GM10248 (cell line): ENCODE measurements at regions of chr17 and their contacts with region 1.

Region 1: GRCh38 chr17:41548844-41549595 is 20.9 kb upstream of the KRT19 start:
- DNase-seq: peak; percentile 83
- CTCF ChIP-seq: peak; percentile 97

Region 2: GRCh38 chr17:40854159-40854814 is 694.7 kb before region 1 on chr17:
- CTCF ChIA-PET with region 1: interaction called, 29 read pairs
- POLR2A ChIA-PET with region 1: no interaction called
- DNase-seq: no peak
- CTCF ChIP-seq: no peak

Region 3: DNA sequence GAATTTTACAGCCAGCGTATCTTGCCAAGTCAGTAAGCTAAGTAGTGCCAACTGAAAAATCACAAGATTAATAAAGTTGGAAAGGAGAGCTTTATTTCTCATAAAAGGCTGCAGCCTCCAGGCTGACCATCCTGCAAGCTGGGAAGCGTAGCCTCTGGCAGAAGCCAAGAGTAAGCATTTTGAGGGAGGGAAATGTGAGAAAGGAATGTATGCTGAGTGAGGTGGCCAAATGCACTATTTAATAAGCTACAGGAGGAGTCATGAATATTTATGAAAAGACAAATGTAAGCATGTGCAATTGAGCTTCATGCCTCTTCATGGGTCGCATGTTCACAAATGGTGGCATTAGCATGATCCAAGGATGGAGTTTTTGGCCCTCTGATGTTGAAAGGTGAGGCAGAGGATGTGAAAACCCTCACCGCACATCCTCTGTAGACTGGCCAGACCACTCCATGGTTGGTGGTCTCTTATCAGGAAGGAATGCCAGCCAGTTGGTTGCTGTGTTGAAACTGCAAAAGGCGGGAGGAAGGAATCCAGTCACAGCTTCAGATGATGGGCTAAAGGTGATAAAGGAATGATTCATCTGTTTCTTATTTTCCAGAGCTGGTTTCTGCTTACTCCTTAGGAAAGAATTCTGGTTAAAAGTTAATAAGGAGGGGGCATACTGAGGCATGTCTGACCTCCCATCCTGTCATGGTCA is 188.6 kb before region 1 on chr17:
- CTCF ChIA-PET with region 1: no interaction called
- POLR2A ChIA-PET with region 1: no interaction called
- DNase-seq: no peak
- CTCF ChIP-seq: no peak

Region 4: GRCh38 chr17:41486809-41487720 is 62.0 kb before region 1 on chr17:
- CTCF ChIA-PET with region 1: interaction called, 10 read pairs
- POLR2A ChIA-PET with region 1: no interaction called
- DNase-seq: peak; percentile 61
- CTCF ChIP-seq: peak; percentile 42

Region 5: GRCh38 chr17:41559548-41559947 is 10.5 kb after region 1 on chr17:
- CTCF ChIA-PET with region 1: interaction called, 56 read pairs
- POLR2A ChIA-PET with region 1: no interaction called
- DNase-seq: no peak
- CTCF ChIP-seq: no peak

Region 6: GRCh38 chr17:41593311-41593981 is 44.4 kb after region 1 on chr17:
- CTCF ChIA-PET with region 1: interaction called, 12 read pairs
- POLR2A ChIA-PET with region 1: no interaction called
- DNase-seq: no peak
- CTCF ChIP-seq: no peak